ENCODE measurements at regions of chr10 and their contacts with region 1.

Region 1: GRCh38 chr10:75099952-75100763 is 11.3 kb upstream of the SAMD8 start:
- DNase-seq: peak; percentile 80 to 86 (median 84)
- ATAC-seq: peak; percentile 92 to 98 (median 96)
- H3K4me3 ChIP-seq: no peak overlapping the region
- H3K27ac ChIP-seq: no peak overlapping the region
- H3K4me1 ChIP-seq: peaks cover 0 to 4% (median 0%) of the 10 kb centered on the region in 4 donors
- H3K27me3 ChIP-seq: no peaks in the 10 kb centered on the region
- CTCF ChIP-seq: peak; percentile 95 to 98 (median 97)
- POLR2A ChIP-seq: no peak

Region 2: DNA sequence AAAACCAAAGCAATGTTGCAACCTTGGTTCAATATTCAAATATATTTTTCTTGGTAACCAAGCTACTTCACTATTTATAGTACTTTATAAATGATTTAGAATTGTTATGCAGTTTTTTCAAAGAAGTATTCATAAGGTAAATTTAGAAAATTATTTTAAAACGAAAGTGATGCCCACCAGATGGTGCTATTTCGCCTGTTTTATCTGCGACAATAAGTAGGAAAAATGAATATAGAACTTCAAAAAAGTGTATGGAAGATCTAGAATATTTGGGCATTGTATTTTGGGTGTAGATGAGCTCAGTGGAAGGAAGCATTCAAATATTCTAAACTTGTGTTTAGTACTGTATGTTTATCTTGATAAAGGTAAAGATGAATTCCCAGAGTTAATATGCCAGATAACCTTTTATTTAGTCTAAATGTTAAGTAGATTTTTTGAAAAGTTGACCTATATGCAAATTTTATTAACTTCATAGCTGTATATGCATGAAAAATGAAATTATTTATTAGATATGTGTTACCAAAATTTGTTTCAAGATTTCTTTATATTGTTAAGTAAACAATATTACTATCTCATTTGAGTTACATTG is 856.0 kb before region 1 on chr10:
- intact Hi-C with region 1: loop called in 1 of 2 experiments (anchors 10 kb)
- DNase-seq: no peak
- ATAC-seq: no peak
- H3K4me3 ChIP-seq: no peak overlapping the region
- H3K27ac ChIP-seq: no peak overlapping the region
- H3K4me1 ChIP-seq: no peaks in the 10 kb centered on the region
- H3K27me3 ChIP-seq: no peaks in the 10 kb centered on the region
- CTCF ChIP-seq: peak; percentile 43 to 57 (median 52)
- POLR2A ChIP-seq: no peak